Psoas muscle (tissue), 8 donors: ENCODE measurements at regions of chr5 and their contacts with region 1.

Region 1: DNA sequence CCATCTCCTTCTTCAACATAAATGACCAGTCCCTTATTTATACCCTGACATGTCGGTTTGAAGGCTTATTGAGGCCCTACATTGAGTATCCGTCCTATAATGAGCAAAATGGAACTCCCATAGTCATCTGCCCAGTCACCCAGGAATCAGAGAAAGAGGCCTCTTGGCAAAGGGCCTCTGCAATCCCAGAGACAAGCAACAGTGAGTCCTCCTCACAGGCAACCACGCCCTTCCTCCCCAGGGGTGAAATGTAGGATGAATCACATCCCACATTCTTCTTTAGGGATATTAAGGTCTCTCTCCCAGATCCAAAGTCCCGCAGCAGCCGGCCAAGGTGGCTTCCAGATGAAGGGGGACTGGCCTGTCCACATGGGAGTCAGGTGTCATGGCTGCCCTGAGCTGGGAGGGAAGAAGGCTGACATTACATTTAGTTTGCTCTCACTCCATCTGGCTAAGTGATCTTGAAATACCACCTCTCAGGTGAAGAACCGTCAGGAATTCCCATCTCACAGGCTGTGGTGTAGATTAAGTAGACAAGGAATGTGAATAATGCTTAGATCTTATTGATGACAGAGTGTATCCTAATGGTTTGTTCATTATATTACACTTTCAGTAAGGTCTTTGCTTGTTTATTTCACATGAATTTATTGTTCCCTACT is 38.2 kb upstream of the BTNL3 start:
- DNase-seq: no peak
- ATAC-seq: no peak
- H3K4me3 ChIP-seq: no peak overlapping the region
- H3K27ac ChIP-seq: no peak overlapping the region
- H3K4me1 ChIP-seq: no peaks in the 10 kb centered on the region
- H3K27me3 ChIP-seq: no peaks in the 10 kb centered on the region
- CTCF ChIP-seq: no peak

Region 2: GRCh38 chr5:181005791-181006190 is 55.4 kb after region 1 on chr5:
- intact Hi-C with region 1: loop called in 1 of 2 experiments (anchors 1 kb)
- DNase-seq: no peak
- ATAC-seq: no peak
- H3K4me3 ChIP-seq: no peak overlapping the region
- H3K27ac ChIP-seq: no peak overlapping the region
- H3K4me1 ChIP-seq: no peaks in the 10 kb centered on the region
- H3K27me3 ChIP-seq: peaks cover 0 to 4% (median 3%) of the 10 kb centered on the region in 3 donors
- CTCF ChIP-seq: no peak